Lower leg skin (tissue), 4 donors: ENCODE measurements at regions of chr9 and their contacts with region 1.

Region 1: DNA sequence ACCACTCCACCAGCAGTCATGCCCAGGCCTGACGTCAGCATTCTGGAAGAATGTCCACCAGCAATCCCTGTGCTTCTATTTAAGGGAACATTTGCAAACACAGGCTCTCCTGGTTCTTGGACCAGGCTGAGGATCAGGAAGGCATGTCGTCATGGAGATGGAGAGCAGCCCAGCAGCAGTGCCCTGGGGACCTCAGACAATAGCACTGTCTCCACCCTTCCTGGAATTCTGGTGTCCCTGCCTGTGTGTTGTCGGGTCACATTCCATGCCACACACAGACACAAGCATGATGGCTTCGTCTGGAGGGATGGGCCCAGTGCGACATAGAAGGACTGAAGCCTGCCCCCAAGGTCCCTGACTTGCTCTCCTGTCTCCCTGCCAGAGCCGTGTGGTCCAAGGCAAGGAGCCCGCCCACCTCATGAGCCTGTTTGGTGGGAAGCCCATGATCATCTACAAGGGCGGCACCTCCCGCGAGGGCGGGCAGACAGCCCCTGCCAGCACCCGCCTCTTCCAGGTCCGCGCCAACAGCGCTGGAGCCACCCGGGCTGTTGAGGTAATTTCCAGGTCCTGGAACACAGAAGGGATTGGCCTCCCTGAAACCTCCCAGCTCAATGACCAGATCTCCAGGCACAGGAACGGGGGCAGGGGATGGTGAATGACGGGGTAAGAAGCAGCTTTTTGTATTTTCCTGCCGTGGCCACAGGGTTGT is 43.8 kb downstream of the STOM start:
- DNase-seq: peak; percentile 94 to 98
- H3K4me3 ChIP-seq: no peak overlapping the region
- CTCF ChIP-seq: no peak
- POLR2A ChIP-seq: no peak

Region 2: DNA sequence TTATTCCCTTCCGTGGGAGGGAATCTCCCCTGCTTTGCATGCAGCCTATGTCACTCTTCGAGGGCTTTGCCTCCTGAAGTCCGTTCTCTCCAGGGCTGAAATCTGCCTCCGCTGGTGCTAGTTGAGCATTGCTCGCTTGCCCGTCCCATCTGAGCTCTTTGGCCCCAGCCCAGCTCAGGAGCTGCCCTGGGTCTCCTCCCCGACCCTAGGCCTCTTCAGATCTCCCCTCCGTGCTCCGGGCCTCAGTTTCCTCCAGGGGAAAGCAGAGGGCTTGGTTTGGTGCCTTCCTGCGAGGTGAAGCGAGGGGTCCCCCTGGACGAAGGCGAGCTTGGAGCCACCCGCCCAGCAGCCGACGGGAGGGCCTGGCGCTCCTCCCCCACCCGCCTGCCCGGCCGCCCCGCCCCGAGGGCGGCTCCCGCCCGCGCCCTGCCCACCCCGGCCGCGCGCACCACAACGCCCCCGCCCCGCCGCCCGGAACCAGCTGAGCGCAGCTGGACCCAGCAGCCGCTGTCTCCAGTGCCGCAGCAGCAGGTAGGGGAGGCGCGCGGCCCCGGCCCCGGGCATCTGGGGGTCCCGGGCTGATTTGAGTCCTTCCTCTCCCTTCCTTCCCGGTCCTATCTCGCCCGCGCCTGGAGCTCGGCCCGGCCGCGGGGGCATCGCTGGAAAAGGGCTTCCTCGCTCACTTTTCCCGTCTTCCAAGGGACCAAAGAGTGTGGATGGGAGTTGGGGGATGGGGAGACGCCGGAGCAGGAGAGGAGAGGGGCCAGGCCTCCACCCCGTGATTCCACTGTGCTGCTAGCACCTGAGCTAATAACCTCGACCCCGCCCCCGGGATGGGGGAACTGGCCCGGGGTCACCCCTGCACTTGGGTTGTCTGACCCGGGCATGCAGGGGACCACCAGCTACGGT is 58.3 kb before region 1 on chr9 and contains the start of gene GSN:
- intact Hi-C with region 1: no loop called
- DNase-seq: peak; percentile 75 to 97
- H3K4me3 ChIP-seq: peak within 1 kb of the TSS; percentile 66
- CTCF ChIP-seq: no peak
- POLR2A ChIP-seq: no peak
- total RNA-seq, gene GSN: 835 to 2,031 (median 1,042) TPM

Region 3: DNA sequence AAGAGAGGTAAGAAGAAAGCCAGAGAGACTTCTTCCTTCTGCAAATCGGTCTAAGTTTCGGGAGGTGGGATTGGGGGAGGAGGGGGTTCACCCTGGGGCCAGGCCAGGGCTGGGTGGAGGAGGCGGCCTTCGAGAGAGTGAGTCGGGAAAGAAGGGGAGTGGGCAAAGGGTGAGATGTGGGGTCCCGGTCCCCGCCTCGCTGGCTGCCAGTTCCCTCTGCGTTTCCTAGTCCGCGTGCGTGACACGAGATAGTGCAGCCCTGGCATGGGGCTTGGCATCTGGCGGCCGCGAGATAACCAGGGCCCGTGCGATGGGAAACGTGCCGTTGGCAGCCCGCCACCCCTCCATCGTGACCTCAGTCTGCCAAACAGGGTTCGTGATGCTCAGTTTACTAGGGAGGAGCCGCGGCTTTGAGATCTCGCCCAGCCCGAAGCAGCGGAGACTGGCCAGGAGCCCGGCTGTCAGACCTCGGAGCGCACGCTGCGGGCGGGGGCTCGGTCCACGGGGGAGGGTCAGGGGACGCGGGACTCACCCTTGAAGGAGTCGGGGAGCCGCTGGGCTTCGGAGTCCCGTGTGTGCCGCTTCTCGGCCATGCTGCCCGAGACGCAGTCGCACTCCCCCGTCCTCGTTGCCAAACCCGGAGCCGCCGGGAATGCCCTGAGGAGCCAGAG is 43.4 kb after region 1 on chr9 and contains the start of gene STOM:
- intact Hi-C with region 1: loop called (anchors 5 kb)
- DNase-seq: peak; percentile 96 to 99
- H3K4me3 ChIP-seq: peak within 1 kb of the TSS; percentile 41
- CTCF ChIP-seq: no peak
- POLR2A ChIP-seq: peak in 1 of 2 donors; percentile 98
- total RNA-seq, gene STOM: 131 to 323 (median 208) TPM

Region 4: GRCh38 chr9:121399883-121400607 is 73.8 kb after region 1 on chr9:
- intact Hi-C with region 1: loop called (anchors 5 kb)
- DNase-seq: no peak
- H3K4me3 ChIP-seq: no peak overlapping the region
- CTCF ChIP-seq: peak in 1 of 3 donors; percentile 33
- POLR2A ChIP-seq: no peak